Activated CD4-positive, alpha-beta T cell treated with anti-CD3 and anti-CD28 coated beads for 36 hours (primary cell): ENCODE measurements at regions of chr14 and their contacts with region 1.

Region 1: GRCh38 chr14:54773171-54773975 is 129.3 kb downstream of the GCH1 start:
- DNase-seq: peak; percentile 92
- ATAC-seq: peak; percentile 81
- H3K4me3 Mint-ChIP-seq: peak overlapping the region; percentile 6
- H3K27ac Mint-ChIP-seq: peak overlapping the region; percentile 83
- H3K4me1 Mint-ChIP-seq: peaks cover 54% of the 10 kb centered on the region
- H3K27me3 Mint-ChIP-seq: peaks cover 14% of the 10 kb centered on the region

Region 2: GRCh38 chr14:54435500-54435981 is 337.8 kb before region 1 on chr14:
- CTCF ChIA-PET with region 1: interaction called, 5 read pairs
- POLR2A ChIA-PET with region 1: no interaction called
- intact Hi-C with region 1: loop called (anchors 1 kb)
- DNase-seq: peak; percentile 32
- ATAC-seq: peak; percentile 96
- H3K4me3 Mint-ChIP-seq: peak overlapping the region; percentile 47
- H3K27ac Mint-ChIP-seq: peak overlapping the region; percentile 87
- H3K4me1 Mint-ChIP-seq: peaks cover 80% of the 10 kb centered on the region
- H3K27me3 Mint-ChIP-seq: no peaks in the 10 kb centered on the region

Region 3: DNA sequence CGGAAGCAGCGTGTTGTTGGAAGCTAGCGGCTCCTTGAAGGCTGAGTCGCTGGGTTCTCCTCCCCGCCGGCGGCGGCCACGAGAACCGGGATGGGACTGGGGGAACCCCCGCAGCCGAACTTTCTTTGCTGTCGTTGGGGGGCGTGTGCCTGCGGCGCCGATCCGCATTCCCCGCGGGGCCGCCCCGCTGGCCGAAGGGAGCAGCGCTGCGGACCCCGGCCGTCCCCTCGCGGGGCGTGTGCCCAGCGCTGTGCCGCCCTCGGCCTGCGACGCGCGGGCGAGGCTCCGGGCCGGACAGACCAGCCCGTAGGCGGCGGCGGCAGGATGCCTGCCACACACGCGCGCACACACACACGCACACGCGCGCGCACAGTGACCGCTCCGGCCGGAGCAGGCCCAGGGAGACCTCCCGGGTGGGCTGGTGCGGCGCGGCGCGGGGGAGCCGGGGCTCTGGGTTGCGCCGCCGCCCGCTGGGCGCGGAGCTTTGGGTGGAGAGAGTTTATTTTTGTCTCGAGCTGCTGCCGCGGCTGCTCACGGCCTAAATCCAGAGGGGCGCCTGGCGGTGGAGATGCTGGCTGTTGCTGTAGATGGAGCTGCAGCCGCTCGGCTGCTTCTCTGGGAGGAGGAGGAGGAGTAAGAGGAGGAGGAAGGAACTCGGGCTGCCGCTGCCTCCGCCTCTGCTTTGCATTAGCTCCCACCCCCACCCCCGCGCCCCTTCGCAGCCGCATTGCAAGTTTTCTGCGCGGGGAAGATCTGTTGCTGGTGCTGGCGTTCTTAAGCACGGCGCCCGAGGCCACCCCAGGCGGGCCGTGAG is 206.8 kb before region 1 on chr14 and contains the start of gene SAMD4A:
- CTCF ChIA-PET with region 1: interaction called, 189 read pairs
- POLR2A ChIA-PET with region 1: interaction called, 5 read pairs
- intact Hi-C with region 1: loop called (anchors 1 kb)
- DNase-seq: peak; percentile 75
- ATAC-seq: peak; percentile 20
- H3K4me3 Mint-ChIP-seq: peak within 1 kb of the TSS; percentile 85
- H3K27ac Mint-ChIP-seq: peak within 1 kb of the TSS; percentile 89
- H3K4me1 Mint-ChIP-seq: peaks cover 25% of the 10 kb centered on the region
- H3K27me3 Mint-ChIP-seq: peaks cover 15% of the 10 kb centered on the region
- total RNA-seq, gene SAMD4A: 2.7 to 2.8 TPM

Region 4: DNA sequence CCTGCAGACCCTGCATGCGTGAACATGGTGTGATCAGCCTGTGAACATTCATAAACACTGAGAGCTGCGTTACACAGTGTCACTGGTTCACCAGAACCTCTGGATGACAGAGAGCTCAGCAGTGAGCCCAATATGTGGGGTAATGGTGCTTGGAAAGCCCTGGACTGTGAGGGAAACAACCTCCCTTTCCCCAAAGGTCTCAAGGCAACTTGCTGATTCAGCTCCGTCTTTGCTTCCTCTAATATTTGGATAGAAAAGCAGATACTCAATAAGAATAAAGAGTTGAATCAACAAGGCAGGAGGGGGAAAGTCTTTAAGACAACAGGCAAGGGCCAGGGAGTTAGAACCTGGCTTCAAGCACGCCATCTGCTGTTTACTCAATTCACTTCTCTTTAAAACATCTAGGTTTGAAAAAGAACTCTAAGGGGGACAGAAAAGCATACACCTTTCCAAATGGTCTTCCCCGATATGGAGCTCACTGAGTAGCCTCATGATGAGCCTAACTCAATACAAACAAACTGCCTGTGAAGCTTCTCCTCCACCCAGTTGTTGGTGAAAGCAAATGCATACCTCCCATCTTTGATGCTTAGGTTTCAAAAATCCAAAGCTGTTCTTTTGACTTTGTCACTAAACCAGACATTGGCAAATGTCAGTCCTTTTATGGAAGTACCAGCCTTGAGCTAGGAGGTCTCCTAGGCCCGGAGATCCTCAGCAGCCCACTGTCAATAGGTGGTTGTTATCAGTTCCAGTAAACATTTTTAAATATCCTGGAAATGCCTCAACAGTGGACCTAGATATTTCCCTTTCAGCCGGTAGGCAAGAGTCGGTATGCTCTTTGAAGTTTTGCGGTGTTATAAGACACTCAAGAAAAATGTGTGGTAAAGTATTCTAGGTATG is 130.3 kb before region 1 on chr14:
- CTCF ChIA-PET with region 1: interaction called, 3 read pairs
- POLR2A ChIA-PET with region 1: no interaction called
- intact Hi-C with region 1: loop called in 1 of 2 experiments (anchors 1 kb)
- DNase-seq: peak; percentile 22
- ATAC-seq: no peak
- H3K4me3 Mint-ChIP-seq: no peak overlapping the region
- H3K27ac Mint-ChIP-seq: no peak overlapping the region
- H3K4me1 Mint-ChIP-seq: peaks cover 12% of the 10 kb centered on the region
- H3K27me3 Mint-ChIP-seq: no peaks in the 10 kb centered on the region

Region 5: GRCh38 chr14:54730156-54730961 is 43.0 kb before region 1 on chr14:
- CTCF ChIA-PET with region 1: interaction called, 49 read pairs
- POLR2A ChIA-PET with region 1: no interaction called
- intact Hi-C with region 1: loop called (anchors 1 kb)
- DNase-seq: peak; percentile 61
- ATAC-seq: peak; percentile 93
- H3K4me3 Mint-ChIP-seq: peak overlapping the region; percentile 58
- H3K27ac Mint-ChIP-seq: peak overlapping the region; percentile 94
- H3K4me1 Mint-ChIP-seq: peaks cover 40% of the 10 kb centered on the region
- H3K27me3 Mint-ChIP-seq: peaks cover 18% of the 10 kb centered on the region

Region 6: DNA sequence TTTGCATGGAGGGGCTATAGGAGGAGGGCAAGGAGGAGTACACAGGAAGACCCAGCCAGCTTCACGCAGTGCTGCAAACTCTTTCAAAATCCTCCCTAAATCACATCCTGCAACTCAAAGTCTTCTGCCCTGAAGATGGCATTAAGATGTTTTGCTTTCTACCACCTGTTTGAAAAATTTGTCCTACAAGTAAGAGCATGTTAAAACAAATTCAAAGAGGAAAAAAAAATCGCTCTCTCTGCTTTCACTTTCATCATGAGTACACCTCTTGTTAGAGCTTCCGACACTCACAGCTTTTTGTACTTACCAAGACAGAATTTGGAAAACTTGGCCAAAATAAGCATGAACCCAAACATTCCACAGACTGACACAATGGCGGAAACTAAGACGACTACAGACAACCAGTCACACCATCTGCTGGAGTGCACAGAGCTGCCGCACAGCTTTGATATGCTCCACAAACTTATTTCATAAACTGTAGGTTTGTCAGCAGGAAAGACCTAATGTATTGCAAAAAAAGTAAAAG is 107.9 kb after region 1 on chr14:
- CTCF ChIA-PET with region 1: interaction called, 4 read pairs
- POLR2A ChIA-PET with region 1: no interaction called
- intact Hi-C with region 1: loop called in 1 of 2 experiments (anchors 1 kb)
- DNase-seq: peak; percentile 34
- ATAC-seq: peak; percentile 71
- H3K4me3 Mint-ChIP-seq: peak overlapping the region; percentile 83
- H3K27ac Mint-ChIP-seq: peak overlapping the region; percentile 100
- H3K4me1 Mint-ChIP-seq: peaks cover 39% of the 10 kb centered on the region
- H3K27me3 Mint-ChIP-seq: no peaks in the 10 kb centered on the region